Psoas muscle (tissue), 8 donors: ENCODE measurements at regions of chr4 and their contacts with region 1.

Region 1: GRCh38 chr4:139740531-139741041 is 75.0 kb downstream of the MGST2 start:
- DNase-seq: peak; percentile 62 to 81
- ATAC-seq: peak; percentile 91 to 95 (median 94)
- H3K4me3 ChIP-seq: peak overlapping the region; percentile 49
- H3K27ac ChIP-seq: peak overlapping the region; percentile 92
- H3K4me1 ChIP-seq: peaks cover 48% of the 10 kb centered on the region
- H3K27me3 ChIP-seq: no peaks in the 10 kb centered on the region
- CTCF ChIP-seq: peak; percentile 14

Region 2: DNA sequence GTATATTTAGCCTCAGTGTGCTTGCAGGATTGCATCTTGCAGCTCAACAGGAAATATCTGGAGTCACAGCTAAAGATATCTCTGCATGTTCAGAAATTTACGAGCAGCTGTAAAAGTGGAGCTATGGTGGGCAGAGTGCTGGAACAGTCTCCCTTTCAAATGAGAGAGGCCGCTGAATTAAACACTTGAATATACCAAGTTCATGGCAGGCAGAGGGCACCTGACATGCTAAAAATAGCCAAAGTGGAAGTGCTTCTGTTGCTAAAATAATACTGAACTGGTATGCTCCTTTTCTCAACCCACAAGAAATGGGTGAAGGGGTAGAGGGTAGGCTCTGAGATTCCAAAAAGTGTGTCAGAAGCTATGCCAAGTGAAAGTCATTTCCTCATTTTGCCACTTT is 23.1 kb after region 1 on chr4:
- intact Hi-C with region 1: loop called in 1 of 2 experiments (anchors 2 kb)
- DNase-seq: no peak
- ATAC-seq: peak; percentile 29 to 86 (median 78)
- H3K4me3 ChIP-seq: peak overlapping the region; percentile 51
- H3K27ac ChIP-seq: peak overlapping the region; percentile 87
- H3K4me1 ChIP-seq: peaks cover 58% of the 10 kb centered on the region
- H3K27me3 ChIP-seq: no peaks in the 10 kb centered on the region
- CTCF ChIP-seq: no peak

Region 3: DNA sequence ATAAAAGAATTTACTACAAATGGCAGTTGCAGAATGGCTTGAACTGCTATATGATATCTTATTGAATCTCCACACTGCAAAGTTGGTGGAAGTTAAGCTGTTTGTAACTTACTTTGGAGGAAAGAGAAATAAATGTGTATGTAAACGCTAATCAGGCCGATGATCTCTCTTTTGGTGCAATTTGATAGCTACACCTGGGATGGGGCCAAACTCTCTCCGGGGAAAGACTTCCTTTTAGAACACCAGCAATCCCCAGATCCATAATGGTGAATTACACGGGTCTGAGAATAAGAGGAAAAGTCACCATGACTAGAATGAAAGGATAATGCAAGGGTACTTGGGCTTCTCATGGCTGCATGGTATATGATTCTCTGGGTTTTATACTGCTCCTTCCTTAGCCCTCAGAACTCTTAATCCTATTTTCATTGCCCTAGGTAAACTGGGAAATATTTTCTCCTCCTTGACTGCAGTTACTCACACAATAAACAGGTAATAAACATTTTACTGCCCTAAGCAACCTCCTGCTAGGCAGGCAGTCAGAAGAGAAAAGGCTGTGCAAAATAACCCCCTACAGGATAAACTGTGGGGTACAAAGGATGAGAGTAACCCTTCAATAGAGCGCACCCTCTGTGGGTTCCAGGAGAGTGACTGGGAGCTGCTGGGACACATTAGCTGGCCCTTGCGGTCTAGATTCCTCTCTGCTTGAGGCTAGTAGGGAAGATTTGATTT is 34.3 kb after region 1 on chr4:
- intact Hi-C with region 1: loop called in 1 of 2 experiments (anchors 5 kb)
- DNase-seq: no peak
- ATAC-seq: no peak
- H3K4me3 ChIP-seq: no peak overlapping the region
- H3K27ac ChIP-seq: no peak overlapping the region
- H3K4me1 ChIP-seq: peaks cover 30% of the 10 kb centered on the region
- H3K27me3 ChIP-seq: no peaks in the 10 kb centered on the region
- CTCF ChIP-seq: no peak

Region 4: GRCh38 chr4:139794158-139794954 is 53.8 kb after region 1 on chr4:
- intact Hi-C with region 1: no loop called
- DNase-seq: no peak
- ATAC-seq: peak in 1 of 4 donors; percentile 54
- H3K4me3 ChIP-seq: no peak overlapping the region
- H3K27ac ChIP-seq: no peak overlapping the region
- H3K4me1 ChIP-seq: no peaks in the 10 kb centered on the region
- H3K27me3 ChIP-seq: no peaks in the 10 kb centered on the region
- CTCF ChIP-seq: no peak

Region 5: DNA sequence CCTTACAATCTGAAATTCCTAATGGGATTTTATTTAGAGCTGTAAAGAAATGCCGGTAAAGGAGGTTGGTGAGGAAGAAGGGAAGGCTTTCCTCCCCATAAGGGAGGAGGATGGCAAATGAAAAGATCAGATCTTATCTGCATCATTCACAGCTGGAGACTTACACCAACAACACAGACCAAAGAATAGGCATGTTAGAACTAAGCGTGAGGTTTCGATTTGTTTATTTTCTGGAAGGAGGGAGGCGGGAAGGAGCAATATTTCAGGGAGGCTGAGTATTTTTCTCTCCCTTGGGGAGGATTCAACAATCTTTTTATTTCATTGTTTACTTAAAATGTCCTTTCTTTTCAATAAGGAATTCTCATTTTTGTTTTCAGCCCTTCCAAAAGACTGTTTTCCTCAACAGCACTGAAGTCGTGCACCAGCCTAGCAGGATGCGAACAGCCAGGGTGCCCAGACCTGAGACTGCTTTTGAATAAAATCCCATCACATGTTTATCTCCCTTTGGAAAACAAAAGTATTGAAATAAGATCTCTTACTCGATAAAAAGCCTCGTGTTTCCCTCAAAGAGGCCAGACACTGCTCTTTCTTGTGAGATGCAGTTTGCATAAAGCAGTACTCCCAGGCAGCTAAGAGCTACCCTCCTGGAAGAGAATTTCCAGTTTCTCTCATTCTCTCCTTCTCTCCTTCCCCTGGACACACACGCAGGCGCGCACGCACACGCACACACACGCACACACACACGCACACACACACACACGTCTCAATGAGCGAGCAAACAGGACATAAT is 161.1 kb after region 1 on chr4:
- intact Hi-C with region 1: no loop called
- DNase-seq: no peak
- ATAC-seq: peak in 3 of 4 donors; percentile 57 to 78 (median 70)
- H3K4me3 ChIP-seq: peak overlapping the region; percentile 67
- H3K27ac ChIP-seq: peak overlapping the region; percentile 50
- H3K4me1 ChIP-seq: no peaks in the 10 kb centered on the region
- H3K27me3 ChIP-seq: no peaks in the 10 kb centered on the region
- CTCF ChIP-seq: no peak